Mammary epithelial cell (primary cell): ENCODE measurements at regions of chr3 and their contacts with region 1.

Region 1: DNA sequence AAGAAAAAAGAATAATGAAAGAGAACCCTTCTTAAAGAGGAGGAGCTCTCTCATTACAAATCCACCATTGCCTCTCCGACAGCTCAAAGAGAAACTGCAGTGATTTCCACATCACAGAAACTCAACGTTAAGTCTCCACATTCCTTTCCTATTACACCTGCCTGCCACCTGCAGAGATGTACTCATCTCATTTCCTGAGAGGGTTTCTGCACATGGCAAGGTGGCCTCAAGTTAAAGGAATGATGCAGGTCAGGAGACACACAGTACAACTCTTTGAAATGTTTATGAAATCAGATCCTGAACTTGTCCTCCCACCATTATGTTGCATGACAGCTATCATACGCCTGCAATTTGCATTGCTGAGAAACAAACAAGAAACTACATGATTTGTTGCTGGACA is 458.4 kb upstream of the ADAMTS9 start:
- DNase-seq: peak; percentile 100
- H3K4me3 ChIP-seq: no peak overlapping the region
- H3K27ac ChIP-seq: peak overlapping the region; percentile 99
- H3K4me1 ChIP-seq: peaks cover 31% of the 10 kb centered on the region
- H3K27me3 ChIP-seq: no peaks in the 10 kb centered on the region
- CTCF ChIP-seq: no peak

Region 2: GRCh38 chr3:64011685-64012084 is 1134.5 kb before region 1 on chr3:
- CTCF ChIA-PET with region 1: no interaction called
- dilution Hi-C with region 1: no loop called
- in situ Hi-C with region 1: no loop called
- intact Hi-C with region 1: no loop called
- DNase-seq: peak; percentile 64
- H3K4me3 ChIP-seq: no peak overlapping the region
- H3K27ac ChIP-seq: peak overlapping the region; percentile 11
- H3K4me1 ChIP-seq: peaks cover 3% of the 10 kb centered on the region
- H3K27me3 ChIP-seq: no peaks in the 10 kb centered on the region
- CTCF ChIP-seq: no peak

Region 3: GRCh38 chr3:64932666-64933342 is 213.4 kb before region 1 on chr3:
- CTCF ChIA-PET with region 1: no interaction called
- dilution Hi-C with region 1: no loop called
- in situ Hi-C with region 1: no loop called
- intact Hi-C with region 1: loop called (anchors 5 kb)
- DNase-seq: peak; percentile 77
- H3K4me3 ChIP-seq: no peak overlapping the region
- H3K27ac ChIP-seq: no peak overlapping the region
- H3K4me1 ChIP-seq: peaks cover 14% of the 10 kb centered on the region
- H3K27me3 ChIP-seq: no peaks in the 10 kb centered on the region
- CTCF ChIP-seq: no peak

Region 4: GRCh38 chr3:64977291-64978100 is 168.7 kb before region 1 on chr3:
- CTCF ChIA-PET with region 1: no interaction called
- dilution Hi-C with region 1: no loop called
- in situ Hi-C with region 1: loop called in 1 of 2 experiments (anchors 5 kb)
- intact Hi-C with region 1: loop called (anchors 1 kb)
- DNase-seq: peak; percentile 99
- H3K4me3 ChIP-seq: peak overlapping the region in 1 of 3 experiments; percentile 1
- H3K27ac ChIP-seq: peak overlapping the region; percentile 96
- H3K4me1 ChIP-seq: peaks cover 46% of the 10 kb centered on the region
- H3K27me3 ChIP-seq: no peaks in the 10 kb centered on the region
- CTCF ChIP-seq: no peak

Region 5: DNA sequence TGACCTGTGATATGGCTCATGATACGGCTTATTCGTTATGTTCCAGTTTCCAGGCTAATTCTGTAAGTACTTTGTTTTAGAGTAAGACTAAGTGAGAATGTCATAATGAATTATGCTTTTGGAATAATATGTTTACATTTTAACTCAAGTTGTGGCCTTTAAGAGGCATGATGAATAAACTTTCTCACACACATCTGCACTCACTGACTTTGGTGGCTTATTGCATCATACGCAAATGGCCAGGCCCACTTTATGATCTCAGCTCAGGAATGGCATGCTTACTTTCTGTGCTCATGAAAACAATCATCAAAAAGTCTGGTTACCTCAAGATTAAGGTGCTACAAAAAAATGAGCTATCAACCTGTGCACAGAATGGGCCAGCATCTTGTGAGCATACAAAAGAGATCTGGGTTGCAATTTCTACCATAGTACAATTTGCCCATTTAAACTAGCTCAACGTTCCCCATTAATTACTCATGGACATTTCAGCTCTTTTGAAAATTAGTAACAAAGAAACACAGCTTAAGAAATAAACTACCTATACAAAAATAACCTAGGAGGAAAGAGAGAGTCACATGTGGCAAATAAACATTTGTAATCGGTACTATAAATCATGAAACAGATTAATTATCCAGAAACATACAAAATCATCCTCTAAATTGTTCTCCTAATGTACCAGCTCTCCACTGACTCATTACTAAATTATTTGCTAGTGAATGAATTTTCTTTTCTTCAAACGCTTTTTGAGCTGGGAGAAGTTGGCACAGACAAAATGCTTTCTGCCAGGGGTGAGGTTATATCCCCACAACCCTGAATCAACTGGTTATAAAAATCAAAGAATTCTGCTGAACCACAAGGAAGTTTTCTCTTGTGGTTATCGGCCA is 19.4 kb before region 1 on chr3:
- CTCF ChIA-PET with region 1: no interaction called
- dilution Hi-C with region 1: no loop called
- in situ Hi-C with region 1: no loop called
- intact Hi-C with region 1: loop called (anchors 1 kb)
- DNase-seq: peak; percentile 84
- H3K4me3 ChIP-seq: peak overlapping the region in 1 of 3 experiments; percentile 19
- H3K27ac ChIP-seq: peak overlapping the region; percentile 83
- H3K4me1 ChIP-seq: peaks cover 31% of the 10 kb centered on the region
- H3K27me3 ChIP-seq: no peaks in the 10 kb centered on the region
- CTCF ChIP-seq: no peak

Region 6: GRCh38 chr3:65200310-65200970 is 54.3 kb after region 1 on chr3:
- CTCF ChIA-PET with region 1: no interaction called
- dilution Hi-C with region 1: no loop called
- in situ Hi-C with region 1: no loop called
- intact Hi-C with region 1: no loop called
- DNase-seq: no peak
- H3K4me3 ChIP-seq: no peak overlapping the region
- H3K27ac ChIP-seq: no peak overlapping the region
- H3K4me1 ChIP-seq: no peaks in the 10 kb centered on the region
- H3K27me3 ChIP-seq: peaks cover 3% of the 10 kb centered on the region
- CTCF ChIP-seq: no peak